CD8-positive, alpha-beta T cell (primary cell): ENCODE measurements at regions of chr11 and their contacts with region 1.

Region 1: DNA sequence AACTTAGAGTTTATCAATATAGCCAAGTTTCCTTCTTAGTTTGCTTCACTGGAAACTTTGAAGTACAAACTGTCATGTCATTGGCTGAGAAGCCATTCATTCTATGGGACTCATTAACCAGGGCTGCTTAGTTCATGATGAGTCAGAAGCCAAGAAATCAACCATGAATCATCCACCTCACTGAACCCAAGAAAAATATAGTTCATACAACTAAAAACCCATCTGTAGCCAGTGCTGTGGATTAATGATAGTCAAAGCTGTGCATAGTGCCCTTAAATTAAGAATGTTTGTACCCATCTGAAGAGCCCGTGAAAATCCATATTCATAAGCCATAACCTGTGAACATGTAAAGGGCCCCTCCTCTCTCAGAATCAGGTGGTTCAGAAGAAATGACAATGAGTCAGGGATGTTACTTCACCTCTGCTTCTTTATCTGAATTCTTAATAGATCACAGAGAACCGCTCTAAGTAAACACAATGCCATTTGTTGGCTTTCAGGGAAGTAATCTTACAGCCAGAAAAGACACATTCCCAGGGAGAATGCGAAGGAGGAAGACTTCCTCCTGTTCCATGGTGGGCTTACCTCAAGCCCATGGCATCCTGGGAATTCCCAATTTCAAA is 25.4 kb downstream of the MMP20 start:
- DNase-seq: no peak
- ATAC-seq: no peak
- H3K4me3 ChIP-seq: no peak overlapping the region
- H3K4me3 Mint-ChIP-seq: no peak overlapping the region
- H3K27ac ChIP-seq: no peak overlapping the region
- H3K27ac Mint-ChIP-seq: no peak overlapping the region
- H3K4me1 ChIP-seq: no peaks in the 10 kb centered on the region
- H3K4me1 Mint-ChIP-seq: no peaks in the 10 kb centered on the region
- H3K27me3 ChIP-seq: no peaks in the 10 kb centered on the region
- H3K27me3 Mint-ChIP-seq: no peaks in the 10 kb centered on the region
- CTCF ChIP-seq: no peak

Region 2: GRCh38 chr11:101870510-101870909 is 729.2 kb before region 1 on chr11:
- CTCF ChIA-PET with region 1: no interaction called
- POLR2A ChIA-PET with region 1: no interaction called
- intact Hi-C with region 1: loop called in 1 of 2 experiments (anchors 5 kb)
- DNase-seq: no peak
- ATAC-seq: no peak
- H3K4me3 ChIP-seq: no peak overlapping the region
- H3K4me3 Mint-ChIP-seq: no peak overlapping the region
- H3K27ac ChIP-seq: no peak overlapping the region
- H3K27ac Mint-ChIP-seq: no peak overlapping the region
- H3K4me1 ChIP-seq: no peaks in the 10 kb centered on the region
- H3K4me1 Mint-ChIP-seq: no peaks in the 10 kb centered on the region
- H3K27me3 ChIP-seq: no peaks in the 10 kb centered on the region
- H3K27me3 Mint-ChIP-seq: peaks cover 13% of the 10 kb centered on the region
- CTCF ChIP-seq: no peak

Region 3: DNA sequence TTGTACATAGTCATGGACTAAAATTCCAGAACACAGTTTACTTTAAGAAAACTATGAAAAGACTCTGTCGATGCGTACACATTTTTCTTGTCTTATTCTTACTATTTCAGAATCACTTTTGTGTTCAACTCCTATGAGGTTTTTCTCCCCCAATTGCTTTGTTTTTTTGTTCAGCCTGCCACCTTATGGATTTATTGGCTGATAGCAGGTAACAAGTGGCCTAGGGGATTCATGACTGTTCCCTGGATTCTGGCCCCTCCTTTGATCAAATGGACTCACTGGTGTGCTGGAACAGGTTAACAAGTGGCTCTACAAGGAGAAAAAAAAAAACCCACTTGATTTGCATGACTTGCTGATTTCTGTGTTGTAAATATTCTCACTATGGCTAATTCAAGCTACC is 14.7 kb after region 1 on chr11:
- CTCF ChIA-PET with region 1: interaction called, 10 read pairs
- POLR2A ChIA-PET with region 1: no interaction called
- intact Hi-C with region 1: no loop called
- DNase-seq: peak in 1 of 9 experiments; percentile 9
- ATAC-seq: no peak
- H3K4me3 ChIP-seq: no peak overlapping the region
- H3K4me3 Mint-ChIP-seq: no peak overlapping the region
- H3K27ac ChIP-seq: no peak overlapping the region
- H3K27ac Mint-ChIP-seq: no peak overlapping the region
- H3K4me1 ChIP-seq: no peaks in the 10 kb centered on the region
- H3K4me1 Mint-ChIP-seq: peaks cover 3% of the 10 kb centered on the region
- H3K27me3 ChIP-seq: no peaks in the 10 kb centered on the region
- H3K27me3 Mint-ChIP-seq: no peaks in the 10 kb centered on the region
- CTCF ChIP-seq: no peak

Region 4: GRCh38 chr11:102626676-102627075 is 26.9 kb after region 1 on chr11:
- CTCF ChIA-PET with region 1: no interaction called
- POLR2A ChIA-PET with region 1: no interaction called
- intact Hi-C with region 1: no loop called
- DNase-seq: no peak
- ATAC-seq: no peak
- H3K4me3 ChIP-seq: no peak overlapping the region
- H3K4me3 Mint-ChIP-seq: no peak overlapping the region
- H3K27ac ChIP-seq: no peak overlapping the region
- H3K27ac Mint-ChIP-seq: no peak overlapping the region
- H3K4me1 ChIP-seq: no peaks in the 10 kb centered on the region
- H3K4me1 Mint-ChIP-seq: no peaks in the 10 kb centered on the region
- H3K27me3 ChIP-seq: no peaks in the 10 kb centered on the region
- H3K27me3 Mint-ChIP-seq: peaks cover 7% of the 10 kb centered on the region
- CTCF ChIP-seq: no peak